RWPE1 (cell line): ENCODE measurements at regions of chr2 and their contacts with region 1.

Region 1: GRCh38 chr2:85642725-85643124 is 25.3 kb downstream of the SFTPB start:
- DNase-seq: no peak
- H3K27ac ChIP-seq: no peak overlapping the region
- CTCF ChIP-seq: no peak

Region 2: GRCh38 chr2:84991404-84992151 is 651.1 kb before region 1 on chr2:
- CTCF ChIA-PET with region 1: no interaction called
- POLR2A ChIA-PET with region 1: no interaction called
- DNase-seq: peak; percentile 41
- H3K27ac ChIP-seq: no peak overlapping the region
- CTCF ChIP-seq: no peak

Region 3: GRCh38 chr2:85607268-85608215 is 35.2 kb before region 1 on chr2:
- CTCF ChIA-PET with region 1: no interaction called
- POLR2A ChIA-PET with region 1: no interaction called
- DNase-seq: no peak
- H3K27ac ChIP-seq: no peak overlapping the region; the same call in 1 of the 2 replicates
- CTCF ChIP-seq: no peak

Region 4: GRCh38 chr2:85628658-85629057 is 14.1 kb before region 1 on chr2:
- CTCF ChIA-PET with region 1: interaction called, 12 read pairs
- POLR2A ChIA-PET with region 1: no interaction called
- DNase-seq: no peak
- H3K27ac ChIP-seq: no peak overlapping the region
- CTCF ChIP-seq: no peak

Region 5: GRCh38 chr2:85911814-85912692 is 269.3 kb after region 1 on chr2:
- CTCF ChIA-PET with region 1: no interaction called
- POLR2A ChIA-PET with region 1: no interaction called
- DNase-seq: peak; percentile 91
- H3K27ac ChIP-seq: peak overlapping the region; percentile 82
- CTCF ChIP-seq: no peak